B cell (primary cell): ENCODE measurements at regions of chr2 and their contacts with region 1.

Region 1: GRCh38 chr2:85852937-85853498 is 35.8 kb downstream of the ST3GAL5 start:
- DNase-seq: peak; percentile 81
- ATAC-seq: peak; percentile 82
- H3K4me3 ChIP-seq: peak overlapping the region; percentile 29 to 56 (median 38)
- H3K4me3 Mint-ChIP-seq: peak overlapping the region; percentile 87
- H3K27ac ChIP-seq: peak overlapping the region; percentile 95 to 100
- H3K27ac Mint-ChIP-seq: peak overlapping the region; percentile 99
- H3K4me1 ChIP-seq: peaks cover 49 to 53% of the 10 kb centered on the region in 2 donors
- H3K4me1 Mint-ChIP-seq: peaks cover 70% of the 10 kb centered on the region
- H3K27me3 ChIP-seq: no peaks in the 10 kb centered on the region
- H3K27me3 Mint-ChIP-seq: no peaks in the 10 kb centered on the region
- CTCF ChIP-seq: no peak

Region 2: DNA sequence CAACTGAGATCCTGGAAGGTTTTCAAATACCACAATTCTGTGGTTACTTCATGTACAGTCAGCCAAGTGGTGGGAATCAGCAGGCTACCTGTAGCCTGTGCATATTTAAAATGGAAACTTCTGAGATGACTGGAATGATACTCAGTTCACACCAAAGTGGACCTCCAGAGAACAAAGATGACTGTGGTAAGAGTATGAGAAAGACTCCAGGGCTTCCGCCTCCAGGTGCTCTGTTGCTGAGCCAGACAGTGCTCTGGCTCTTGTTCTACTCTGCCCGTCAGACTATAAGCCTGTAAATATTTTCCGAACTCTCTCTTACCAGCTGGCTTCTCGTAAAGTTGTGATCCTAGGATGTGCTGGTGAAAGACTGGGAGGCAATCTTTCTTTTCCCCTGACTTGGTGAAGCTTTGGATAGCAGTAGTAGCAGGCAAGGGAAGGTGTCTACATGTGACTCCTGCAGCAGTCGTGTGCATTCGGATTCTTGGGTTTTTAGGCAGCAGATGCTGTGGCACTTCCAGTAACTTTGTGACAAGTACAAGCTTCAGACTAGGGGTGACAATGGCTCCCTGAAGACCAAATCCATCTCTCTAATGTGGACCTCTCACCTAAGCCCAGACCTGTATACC is 12.6 kb after region 1 on chr2:
- CTCF ChIA-PET with region 1: interaction called, 4 read pairs
- POLR2A ChIA-PET with region 1: interaction called, 7 read pairs
- intact Hi-C with region 1: loop called (anchors 1 kb)
- DNase-seq: no peak
- ATAC-seq: no peak
- H3K4me3 ChIP-seq: no peak overlapping the region
- H3K4me3 Mint-ChIP-seq: peak overlapping the region; percentile 12
- H3K27ac ChIP-seq: peak overlapping the region in 1 of 2 donors; percentile 68
- H3K27ac Mint-ChIP-seq: peak overlapping the region; percentile 62
- H3K4me1 ChIP-seq: peaks cover 31 to 34% of the 10 kb centered on the region in 2 donors
- H3K4me1 Mint-ChIP-seq: peaks cover 73% of the 10 kb centered on the region
- H3K27me3 ChIP-seq: no peaks in the 10 kb centered on the region
- H3K27me3 Mint-ChIP-seq: no peaks in the 10 kb centered on the region
- CTCF ChIP-seq: no peak

Region 3: DNA sequence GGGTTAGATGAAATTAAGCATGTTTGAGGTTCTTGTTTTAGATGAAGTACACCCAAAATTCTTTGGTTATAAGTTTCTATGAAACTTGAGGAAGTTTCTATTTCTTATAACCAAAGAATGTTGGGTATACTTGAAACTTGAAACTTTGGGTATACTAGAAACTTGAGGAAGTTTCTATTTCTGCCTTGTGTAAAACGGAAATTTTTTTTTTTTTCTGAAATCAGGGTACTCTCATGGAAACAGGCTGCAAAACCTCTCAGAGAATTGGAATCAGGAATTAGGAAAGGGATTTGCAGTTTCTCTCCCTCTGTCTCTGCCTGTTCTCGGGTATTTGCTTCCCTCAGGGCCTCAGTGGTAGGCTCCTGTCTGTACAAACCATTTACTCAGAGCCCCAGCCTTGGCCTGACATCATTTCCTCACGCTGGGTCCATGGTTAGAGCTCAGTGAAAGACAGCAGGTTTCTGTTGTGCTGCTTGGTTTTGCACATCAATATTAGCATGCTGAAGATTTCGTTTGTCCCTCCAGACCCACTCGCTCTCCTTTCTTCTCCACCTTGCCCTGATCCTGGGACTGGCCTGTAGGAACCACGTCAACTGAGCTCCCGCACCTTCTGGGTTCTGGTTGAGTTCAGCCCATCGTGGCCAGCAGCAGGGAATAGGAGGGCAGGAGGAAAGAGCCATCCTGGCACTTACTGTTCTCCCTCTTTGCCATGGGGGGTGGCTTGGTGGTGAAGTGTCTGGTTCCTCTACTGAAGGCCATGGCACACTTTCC is 146.2 kb after region 1 on chr2:
- CTCF ChIA-PET with region 1: interaction called, 3 read pairs
- POLR2A ChIA-PET with region 1: no interaction called
- intact Hi-C with region 1: loop called (anchors 5 kb)
- DNase-seq: peak; percentile 64
- ATAC-seq: peak; percentile 73
- H3K4me3 ChIP-seq: peak overlapping the region in 3 of 5 experiments; percentile 16 to 52 (median 27)
- H3K4me3 Mint-ChIP-seq: peak overlapping the region; percentile 59
- H3K27ac ChIP-seq: peak overlapping the region; percentile 79 to 87
- H3K27ac Mint-ChIP-seq: peak overlapping the region; percentile 93
- H3K4me1 ChIP-seq: peaks cover 73 to 74% of the 10 kb centered on the region in 2 donors
- H3K4me1 Mint-ChIP-seq: peaks cover 78% of the 10 kb centered on the region
- H3K27me3 ChIP-seq: no peaks in the 10 kb centered on the region
- H3K27me3 Mint-ChIP-seq: no peaks in the 10 kb centered on the region
- CTCF ChIP-seq: no peak